ENCODE measurements at regions of chr4 and their contacts with region 1.

Region 1: DNA sequence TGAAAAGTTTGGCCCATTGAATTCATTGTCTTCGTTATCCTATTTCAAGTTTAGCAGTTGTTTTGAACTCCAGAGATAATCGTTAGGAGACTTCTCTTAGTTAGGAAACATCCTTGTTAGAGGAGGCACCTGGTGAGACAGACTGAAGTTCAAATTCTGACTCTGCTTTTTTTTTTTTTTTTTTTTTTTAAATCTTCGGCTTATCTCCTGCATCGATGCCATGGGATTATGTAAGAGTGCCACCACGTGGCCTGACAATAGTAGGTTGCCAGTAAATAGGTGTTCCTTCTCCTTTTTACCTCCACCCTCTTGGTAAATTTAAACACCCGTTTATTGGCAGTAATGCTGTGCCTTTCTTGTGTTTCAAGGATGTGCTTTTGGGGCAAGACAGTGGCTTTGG is 149.3 kb downstream of the SOWAHB start:
- DNase-seq: peak; percentile 41
- ATAC-seq: no peak
- H3K4me3 ChIP-seq: no peak overlapping the region
- H3K27ac ChIP-seq: no peak overlapping the region
- H3K4me1 ChIP-seq: peaks cover 11% of the 10 kb centered on the region
- H3K27me3 ChIP-seq: no peaks in the 10 kb centered on the region
- CTCF ChIP-seq: peak; percentile 41
- POLR2A ChIP-seq: no peak
- RAD21 ChIP-seq: peak; percentile 64

Region 2: GRCh38 chr4:77036206-77036605 is 287.6 kb after region 1 on chr4:
- CTCF ChIA-PET with region 1: no interaction called
- POLR2A ChIA-PET with region 1: no interaction called
- dilution Hi-C with region 1: no loop called
- in situ Hi-C with region 1: no loop called
- intact Hi-C with region 1: loop called (anchors 5 kb)
- DNase-seq: peak; percentile 94
- ATAC-seq: peak; percentile 78
- H3K4me3 ChIP-seq: no peak overlapping the region
- H3K27ac ChIP-seq: peak overlapping the region; percentile 36; the same call in 1 of the 2 replicates
- H3K4me1 ChIP-seq: peaks cover 27% of the 10 kb centered on the region
- H3K27me3 ChIP-seq: no peaks in the 10 kb centered on the region
- CTCF ChIP-seq: no peak
- POLR2A ChIP-seq: no peak
- RAD21 ChIP-seq: no peak